ENCODE measurements at regions of chr5 and their contacts with region 1.

Region 1: GRCh38 chr5:141320225-141321169 is at the start of gene TAF7:
- DNase-seq: peak; percentile 96
- ATAC-seq: peak; percentile 90
- H3K4me3 ChIP-seq: peak within 1 kb of the TSS; percentile 78 to 100 (median 97)
- H3K4me3 Mint-ChIP-seq: peak within 1 kb of the TSS; percentile 96
- H3K27ac ChIP-seq: peak within 1 kb of the TSS; percentile 95 to 96
- H3K27ac Mint-ChIP-seq: peak within 1 kb of the TSS; percentile 98
- H3K4me1 ChIP-seq: peaks cover 17 to 20% of the 10 kb centered on the region in 2 donors
- H3K4me1 Mint-ChIP-seq: peaks cover 28% of the 10 kb centered on the region
- H3K27me3 ChIP-seq: no peaks in the 10 kb centered on the region
- H3K27me3 Mint-ChIP-seq: no peaks in the 10 kb centered on the region
- CTCF ChIP-seq: peak; percentile 89
- total RNA-seq, gene TAF7: 119 TPM in 2 replicates

Region 2: DNA sequence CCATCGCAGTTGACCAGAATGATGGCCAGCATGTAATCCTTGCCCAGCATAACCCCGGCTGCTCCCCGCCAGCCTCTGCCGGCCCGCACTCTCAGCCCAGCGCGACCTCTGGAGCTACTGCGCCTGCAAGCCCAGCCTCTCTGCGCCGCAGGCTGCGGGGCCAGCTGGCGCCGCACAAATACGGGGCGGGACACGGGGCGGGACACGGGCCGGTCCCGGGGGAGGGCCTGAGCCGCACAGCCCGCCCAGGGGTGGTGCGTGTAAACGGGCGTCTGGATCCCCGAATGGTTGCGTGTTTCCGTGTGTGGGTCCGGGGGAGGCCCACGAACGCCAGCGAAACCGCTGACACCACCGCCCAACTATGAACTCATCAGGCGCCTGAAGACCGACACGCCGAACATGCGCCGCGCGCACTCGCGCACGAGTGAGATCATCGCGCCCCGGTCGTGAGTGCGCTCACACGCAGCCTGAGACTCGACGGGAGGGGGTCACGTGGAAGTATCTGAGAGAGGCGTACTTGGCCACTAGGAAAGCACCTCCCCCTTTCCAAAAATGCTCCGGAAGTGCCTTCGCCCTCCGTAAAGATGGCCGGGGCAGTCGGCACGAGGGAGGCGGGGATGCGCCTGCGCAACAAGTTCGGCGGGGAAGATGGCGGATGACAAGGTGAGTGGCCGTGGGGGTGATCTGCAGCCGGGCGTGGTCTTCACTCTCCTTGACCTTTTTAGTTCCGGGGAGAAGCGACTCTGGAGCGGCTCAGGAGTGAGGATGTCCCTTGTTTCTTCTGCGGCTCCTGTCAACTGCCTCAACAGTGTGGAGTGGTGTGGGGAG is 756.1 kb before region 1 on chr5 and contains the starts of genes APBB3 and SLC35A4:
- CTCF ChIA-PET with region 1: no interaction called
- POLR2A ChIA-PET with region 1: no interaction called
- intact Hi-C with region 1: loop called (anchors 10 kb)
- DNase-seq: peak; percentile 99
- ATAC-seq: peak; percentile 89
- H3K4me3 ChIP-seq: peak within 1 kb of the TSS; percentile 71 to 95 (median 91)
- H3K4me3 Mint-ChIP-seq: peak within 1 kb of the TSS; percentile 90
- H3K27ac ChIP-seq: peak within 1 kb of the TSS; percentile 91 to 92
- H3K27ac Mint-ChIP-seq: peak within 1 kb of the TSS; percentile 97
- H3K4me1 ChIP-seq: peaks cover 25 to 36% of the 10 kb centered on the region in 2 donors
- H3K4me1 Mint-ChIP-seq: peaks cover 48% of the 10 kb centered on the region
- H3K27me3 ChIP-seq: no peaks in the 10 kb centered on the region
- H3K27me3 Mint-ChIP-seq: no peaks in the 10 kb centered on the region
- CTCF ChIP-seq: no peak
- total RNA-seq, gene APBB3: 73.9 and 79.7 TPM in 2 replicates
- total RNA-seq, gene SLC35A4: 44.0 and 48.6 TPM in 2 replicates

Region 3: GRCh38 chr5:141512390-141512910 is 192.0 kb after region 1 on chr5:
- CTCF ChIA-PET with region 1: interaction called, 19 read pairs
- POLR2A ChIA-PET with region 1: no interaction called
- intact Hi-C with region 1: loop called (anchors 2 kb)
- DNase-seq: peak; percentile 77
- ATAC-seq: peak; percentile 7
- H3K4me3 ChIP-seq: peak overlapping the region; percentile 31 to 74 (median 60)
- H3K4me3 Mint-ChIP-seq: peak overlapping the region; percentile 92
- H3K27ac ChIP-seq: peak overlapping the region in 1 of 2 donors; percentile 0
- H3K27ac Mint-ChIP-seq: peak overlapping the region; percentile 56
- H3K4me1 ChIP-seq: peaks cover 58 to 89% of the 10 kb centered on the region in 2 donors
- H3K4me1 Mint-ChIP-seq: peaks cover 85% of the 10 kb centered on the region
- H3K27me3 ChIP-seq: no peaks in the 10 kb centered on the region
- H3K27me3 Mint-ChIP-seq: no peaks in the 10 kb centered on the region
- CTCF ChIP-seq: peak; percentile 85

Region 4: GRCh38 chr5:141598391-141599350 is 278.2 kb after region 1 on chr5:
- CTCF ChIA-PET with region 1: interaction called, 11 read pairs
- POLR2A ChIA-PET with region 1: no interaction called
- intact Hi-C with region 1: no loop called
- DNase-seq: no peak
- ATAC-seq: no peak
- H3K4me3 ChIP-seq: no peak overlapping the region
- H3K4me3 Mint-ChIP-seq: peak overlapping the region; percentile 12
- H3K27ac ChIP-seq: peak overlapping the region in 1 of 2 donors; percentile 61
- H3K27ac Mint-ChIP-seq: no peak overlapping the region
- H3K4me1 ChIP-seq: peaks cover 23 to 40% of the 10 kb centered on the region in 2 donors
- H3K4me1 Mint-ChIP-seq: peaks cover 61% of the 10 kb centered on the region
- H3K27me3 ChIP-seq: no peaks in the 10 kb centered on the region
- H3K27me3 Mint-ChIP-seq: no peaks in the 10 kb centered on the region
- CTCF ChIP-seq: no peak

Region 5: GRCh38 chr5:141923448-141924352 is 603.2 kb after region 1 on chr5 and contains the start of gene DELE1:
- CTCF ChIA-PET with region 1: no interaction called
- POLR2A ChIA-PET with region 1: no interaction called
- intact Hi-C with region 1: loop called (anchors 5 kb)
- DNase-seq: peak; percentile 94
- ATAC-seq: peak; percentile 94
- H3K4me3 ChIP-seq: peak within 1 kb of the TSS; percentile 63 to 92 (median 85)
- H3K4me3 Mint-ChIP-seq: peak within 1 kb of the TSS; percentile 92
- H3K27ac ChIP-seq: peak within 1 kb of the TSS; percentile 95 to 98
- H3K27ac Mint-ChIP-seq: peak within 1 kb of the TSS; percentile 96
- H3K4me1 ChIP-seq: peaks cover 12 to 18% of the 10 kb centered on the region in 2 donors
- H3K4me1 Mint-ChIP-seq: peaks cover 20% of the 10 kb centered on the region
- H3K27me3 ChIP-seq: no peaks in the 10 kb centered on the region
- H3K27me3 Mint-ChIP-seq: no peaks in the 10 kb centered on the region
- CTCF ChIP-seq: no peak
- total RNA-seq, gene DELE1: 124 and 134 TPM in 2 replicates

Region 6: GRCh38 chr5:142769741-142770631 is 1449.5 kb after region 1 on chr5 and contains the start of gene ARHGAP26:
- CTCF ChIA-PET with region 1: no interaction called
- POLR2A ChIA-PET with region 1: no interaction called
- intact Hi-C with region 1: loop called (anchors 2 kb)
- DNase-seq: peak; percentile 96
- ATAC-seq: peak; percentile 94
- H3K4me3 ChIP-seq: peak within 1 kb of the TSS; percentile 78 to 90 (median 90)
- H3K4me3 Mint-ChIP-seq: peak within 1 kb of the TSS; percentile 97
- H3K27ac ChIP-seq: peak within 1 kb of the TSS; percentile 3 to 68
- H3K27ac Mint-ChIP-seq: peak within 1 kb of the TSS; percentile 85
- H3K4me1 ChIP-seq: peaks cover 11 to 12% of the 10 kb centered on the region in 2 donors
- H3K4me1 Mint-ChIP-seq: peaks cover 20% of the 10 kb centered on the region
- H3K27me3 ChIP-seq: no peaks in the 10 kb centered on the region
- H3K27me3 Mint-ChIP-seq: no peaks in the 10 kb centered on the region
- CTCF ChIP-seq: peak; percentile 9
- total RNA-seq, gene ARHGAP26: 22.5 and 27.8 TPM in 2 replicates